ENCODE measurements at regions of chr4 and their contacts with region 1.

Region 1: GRCh38 chr4:163494360-163495162 is at the start of gene TMA16:
- DNase-seq: peak; percentile 67 to 91 (median 82)
- H3K4me3 ChIP-seq: peak within 1 kb of the TSS; percentile 50 to 98 (median 85)
- H3K27ac ChIP-seq: peak within 1 kb of the TSS in 56 of 59 donors; percentile 3 to 88 (median 77)
- H3K27me3 ChIP-seq: no peaks in the 10 kb centered on the region
- CTCF ChIP-seq: peak in 22 of 56 donors; percentile 3 to 40 (median 18)
- total RNA-seq, gene TMA16: 5.2 to 19.5 (median 12.7) TPM

Region 2: DNA sequence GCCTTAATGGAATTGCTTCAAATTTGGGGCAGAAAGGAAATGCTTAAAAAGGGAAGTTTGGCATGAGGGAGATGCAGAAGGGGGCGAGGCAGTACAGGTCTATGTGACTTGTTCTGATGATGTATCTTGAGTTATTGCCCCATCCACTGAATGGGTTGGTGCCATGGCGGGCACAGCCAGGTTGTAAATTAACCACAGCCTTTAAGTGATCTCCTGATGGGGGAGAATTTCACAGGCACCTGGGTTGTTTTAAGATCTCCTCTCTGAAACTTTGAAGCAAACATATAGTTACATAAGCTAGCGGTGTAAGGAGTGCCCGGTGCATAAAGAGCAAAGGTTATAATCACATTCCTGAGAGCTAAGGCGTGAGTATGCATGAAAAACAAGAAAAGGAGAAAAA is 113.9 kb before region 1 on chr4:
- intact Hi-C with region 1: no loop called
- DNase-seq: no peak
- H3K4me3 ChIP-seq: no peak overlapping the region
- H3K27ac ChIP-seq: no peak overlapping the region
- H3K27me3 ChIP-seq: no peaks in the 10 kb centered on the region
- CTCF ChIP-seq: no peak

Region 3: GRCh38 chr4:163544407-163545038 is 50.0 kb after region 1 on chr4:
- intact Hi-C with region 1: loop called in 1 of 2 experiments (anchors 2 kb)
- DNase-seq: peak in 9 of 10 donors; percentile 45 to 70 (median 57)
- H3K4me3 ChIP-seq: peak overlapping the region in 55 of 59 donors; percentile 15 to 63 (median 41)
- H3K27ac ChIP-seq: peak overlapping the region in 6 of 59 donors; percentile 1 to 52 (median 16)
- H3K27me3 ChIP-seq: no peaks in the 10 kb centered on the region
- CTCF ChIP-seq: peak; percentile 77 to 97 (median 91)